Psoas muscle (tissue), 8 donors: ENCODE measurements at regions of chr14 and their contacts with region 1.

Region 1: GRCh38 chr14:61475316-61475715 is 153.9 kb downstream of the PRKCH start:
- DNase-seq: no peak
- ATAC-seq: peak in 3 of 4 donors; percentile 47 to 73 (median 52)
- H3K4me3 ChIP-seq: no peak overlapping the region
- H3K27ac ChIP-seq: peak overlapping the region; percentile 81
- H3K4me1 ChIP-seq: peaks cover 45% of the 10 kb centered on the region
- H3K27me3 ChIP-seq: no peaks in the 10 kb centered on the region
- CTCF ChIP-seq: peak; percentile 79

Region 2: DNA sequence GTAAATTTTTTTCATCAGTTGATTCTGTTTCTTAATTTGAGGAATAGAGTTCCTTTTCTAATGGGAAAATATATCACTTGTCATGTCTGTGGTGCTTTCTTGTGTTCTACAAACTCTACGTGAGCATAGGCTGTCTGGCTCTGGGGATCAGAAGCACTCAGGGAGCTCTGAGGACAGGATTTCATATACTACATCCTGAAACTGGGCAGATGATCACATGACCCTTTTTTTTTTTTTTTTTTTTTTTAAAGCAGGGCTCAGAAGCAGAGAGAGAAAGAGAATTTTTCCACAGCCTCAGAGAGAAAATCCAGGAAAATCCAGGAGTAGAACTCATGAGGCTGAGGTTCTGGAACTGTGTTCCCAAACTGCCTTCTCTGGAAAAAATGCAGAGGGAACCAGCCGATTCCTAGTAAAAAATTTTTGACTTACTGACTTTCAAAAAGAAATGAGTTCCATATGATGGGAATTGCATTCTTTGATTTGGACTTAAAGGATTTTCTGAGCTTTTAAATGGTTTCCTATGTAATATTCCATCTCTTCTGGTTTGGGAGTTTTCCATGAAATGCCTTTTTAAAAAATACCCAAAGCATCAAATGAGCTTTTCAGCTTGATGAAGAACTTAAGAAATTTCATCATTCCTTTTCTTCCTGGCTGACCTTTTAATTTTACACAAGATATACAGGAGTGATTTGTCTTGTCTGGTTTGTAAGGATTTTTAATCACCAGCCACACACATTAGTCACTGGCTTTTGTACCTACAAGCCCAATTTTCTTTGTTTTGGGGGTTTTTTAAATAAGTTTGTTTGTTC is 36.9 kb after region 1 on chr14:
- intact Hi-C with region 1: no loop called
- DNase-seq: no peak
- ATAC-seq: no peak
- H3K4me3 ChIP-seq: no peak overlapping the region
- H3K27ac ChIP-seq: no peak overlapping the region
- H3K4me1 ChIP-seq: peaks cover 16% of the 10 kb centered on the region
- H3K27me3 ChIP-seq: no peaks in the 10 kb centered on the region
- CTCF ChIP-seq: no peak

Region 3: GRCh38 chr14:61561657-61562276 is 86.5 kb after region 1 on chr14:
- intact Hi-C with region 1: loop called in 1 of 2 experiments (anchors 5 kb)
- DNase-seq: peak; percentile 76 to 78
- ATAC-seq: peak; percentile 72 to 85 (median 81)
- H3K4me3 ChIP-seq: no peak overlapping the region
- H3K27ac ChIP-seq: peak overlapping the region; percentile 83
- H3K4me1 ChIP-seq: peaks cover 28% of the 10 kb centered on the region
- H3K27me3 ChIP-seq: no peaks in the 10 kb centered on the region
- CTCF ChIP-seq: no peak

Region 4: GRCh38 chr14:61730756-61731373 is 255.5 kb after region 1 on chr14:
- intact Hi-C with region 1: loop called in 1 of 2 experiments (anchors 5 kb)
- DNase-seq: no peak
- ATAC-seq: peak in 1 of 4 donors; percentile 44
- H3K4me3 ChIP-seq: no peak overlapping the region
- H3K27ac ChIP-seq: no peak overlapping the region
- H3K4me1 ChIP-seq: no peaks in the 10 kb centered on the region
- H3K27me3 ChIP-seq: no peaks in the 10 kb centered on the region
- CTCF ChIP-seq: peak; percentile 48